ENCODE measurements at regions of chr17 and their contacts with region 1.

Region 1: GRCh38 chr17:13017659-13018459 is at the start of gene ELAC2:
- DNase-seq: peak; percentile 88 to 97 (median 93)
- ATAC-seq: peak; percentile 99 to 100 (median 100)
- H3K4me3 ChIP-seq: peak within 1 kb of the TSS; percentile 88 to 94
- H3K4me3 Mint-ChIP-seq: peak within 1 kb of the TSS; percentile 95 to 97 (median 97)
- H3K27ac ChIP-seq: peak within 1 kb of the TSS; percentile 63
- H3K27ac Mint-ChIP-seq: peak within 1 kb of the TSS; percentile 96 to 97
- H3K4me1 ChIP-seq: peaks cover 5 to 23% of the 10 kb centered on the region in 2 experiments
- H3K4me1 Mint-ChIP-seq: peaks cover 30 to 40% (median 38%) of the 10 kb centered on the region in 3 donors
- H3K27me3 ChIP-seq: no peaks in the 10 kb centered on the region
- H3K27me3 Mint-ChIP-seq: no peaks in the 10 kb centered on the region
- total RNA-seq, gene ELAC2: 62.5 to 71.6 (median 66.4) TPM

Region 2: GRCh38 chr17:13002766-13003451 is 14.9 kb before region 1 on chr17:
- CTCF ChIA-PET with region 1: interaction called, 3 to 16 read pairs
- POLR2A ChIA-PET with region 1: interaction called in 1 of 2 experiments, 5 read pairs
- DNase-seq: peak in 23 of 35 experiments; percentile 9 to 69 (median 27)
- ATAC-seq: peak; percentile 32 to 51 (median 42)
- H3K4me3 ChIP-seq: no peak overlapping the region
- H3K4me3 Mint-ChIP-seq: no peak overlapping the region
- H3K27ac ChIP-seq: no peak overlapping the region
- H3K27ac Mint-ChIP-seq: no peak overlapping the region
- H3K4me1 ChIP-seq: peaks cover 0 to 5% of the 10 kb centered on the region in 2 experiments
- H3K4me1 Mint-ChIP-seq: peaks cover 0 to 3% (median 2%) of the 10 kb centered on the region in 3 donors
- H3K27me3 ChIP-seq: no peaks in the 10 kb centered on the region
- H3K27me3 Mint-ChIP-seq: no peaks in the 10 kb centered on the region

Measured in T-cell (primary cell).